Heart left ventricle (tissue), 16 donors: ENCODE measurements at regions of chr15 and their contacts with region 1.

Region 1: GRCh38 chr15:34987985-34988873 is at the start of gene ZNF770:
- DNase-seq: peak; percentile 79 to 91 (median 82)
- ATAC-seq: peak; percentile 88 to 95 (median 93)
- H3K4me3 ChIP-seq: peak within 1 kb of the TSS; percentile 59 to 89 (median 82)
- H3K27ac ChIP-seq: peak within 1 kb of the TSS; percentile 96 to 100 (median 98)
- H3K4me1 ChIP-seq: peaks cover 6 to 47% (median 38%) of the 10 kb centered on the region in 12 donors
- H3K27me3 ChIP-seq: no peaks in the 10 kb centered on the region
- CTCF ChIP-seq: no peak
- POLR2A ChIP-seq: peak in 1 of 2 donors; percentile 78
- total RNA-seq, gene ZNF770: 20.6 to 44.7 (median 39.1) TPM

Region 2: DNA sequence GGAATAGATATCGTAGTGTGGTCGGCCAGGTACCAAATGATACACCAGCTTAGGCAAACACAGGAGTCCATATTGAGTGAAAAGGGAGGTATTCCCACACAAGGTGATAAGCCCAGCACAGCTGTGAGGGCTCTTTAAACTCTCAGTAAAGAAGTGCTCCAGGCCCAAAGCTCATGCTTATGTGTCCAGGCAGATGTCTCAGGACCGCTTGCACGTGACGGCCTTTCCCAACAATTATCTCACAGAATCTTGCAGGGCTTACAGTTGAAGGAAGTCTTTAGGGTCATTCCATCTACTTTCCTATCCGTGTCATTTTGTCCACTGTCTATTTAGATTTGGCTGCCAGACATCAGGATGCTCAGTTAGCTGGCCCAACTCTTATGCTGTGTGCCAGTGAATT is 163.2 kb before region 1 on chr15:
- intact Hi-C with region 1: no loop called
- DNase-seq: no peak
- ATAC-seq: no peak
- H3K4me3 ChIP-seq: no peak overlapping the region
- H3K27ac ChIP-seq: no peak overlapping the region
- H3K4me1 ChIP-seq: no peaks in the 10 kb centered on the region
- H3K27me3 ChIP-seq: peaks cover 0 to 3% (median 0%) of the 10 kb centered on the region in 9 donors
- CTCF ChIP-seq: no peak
- POLR2A ChIP-seq: no peak

Region 3: DNA sequence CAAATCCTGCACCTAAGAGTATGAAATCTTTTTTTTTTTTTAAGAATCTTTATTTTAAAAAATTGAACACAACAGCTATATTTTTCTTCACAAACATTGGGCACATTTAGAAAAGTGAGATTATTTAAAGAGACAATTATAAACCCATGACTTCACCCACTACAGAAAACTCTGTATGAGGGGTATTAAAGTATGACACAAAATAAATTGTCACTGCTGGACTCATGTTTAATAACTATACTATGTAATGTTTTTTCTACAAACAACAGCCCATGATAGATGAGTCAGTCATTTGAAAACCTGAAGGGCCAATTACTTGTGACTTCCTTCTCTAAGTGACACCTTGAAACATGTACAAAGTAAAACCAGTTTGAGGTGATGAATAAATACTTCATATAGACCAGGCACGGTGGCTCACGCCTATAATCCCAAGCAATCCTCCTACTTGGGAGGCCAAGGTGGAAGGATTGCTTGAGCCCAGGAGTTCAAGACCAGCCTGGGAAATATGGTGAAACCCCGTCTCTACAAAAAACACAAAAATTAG is 54.7 kb before region 1 on chr15:
- intact Hi-C with region 1: no loop called
- DNase-seq: no peak
- ATAC-seq: no peak
- H3K4me3 ChIP-seq: no peak overlapping the region
- H3K27ac ChIP-seq: no peak overlapping the region
- H3K4me1 ChIP-seq: no peaks in the 10 kb centered on the region
- H3K27me3 ChIP-seq: no peaks in the 10 kb centered on the region
- CTCF ChIP-seq: no peak
- POLR2A ChIP-seq: no peak

Region 4: DNA sequence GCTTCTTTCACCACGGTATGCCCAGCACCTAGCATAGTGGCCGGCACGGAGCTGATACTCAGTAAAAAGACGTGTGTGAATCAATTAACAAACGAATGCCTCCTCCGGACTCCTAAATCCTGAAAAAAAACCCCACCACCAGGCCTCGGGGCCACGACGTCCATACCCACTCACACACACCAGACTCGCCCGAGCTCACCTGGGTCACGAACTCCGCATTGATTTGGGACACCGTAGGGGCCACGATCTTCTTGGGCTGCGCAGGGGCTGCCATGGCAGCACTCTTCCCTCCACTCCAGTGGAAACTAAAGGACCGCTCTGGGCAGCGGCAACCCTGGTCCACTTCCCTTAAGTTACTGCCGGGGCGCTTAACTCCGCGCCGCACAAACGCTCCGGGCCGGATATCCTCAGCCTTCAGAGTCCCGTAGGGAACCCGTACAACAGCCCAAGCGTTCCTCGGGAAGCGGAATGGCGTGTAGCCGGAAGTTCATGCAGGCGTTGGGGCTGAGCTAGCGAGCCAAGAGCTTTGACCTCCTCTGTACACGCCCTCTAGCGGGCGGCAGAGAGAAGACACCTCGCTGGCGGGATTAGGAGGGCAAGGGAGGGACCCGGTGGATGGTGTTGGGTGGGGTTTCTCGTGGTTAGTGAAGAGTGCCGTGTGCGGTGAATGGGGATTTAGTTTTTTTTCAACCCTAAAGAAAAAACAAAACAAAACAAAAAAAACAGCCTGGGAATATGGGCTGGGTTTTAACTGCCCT is 18.7 kb before region 1 on chr15 and contains the start of gene AQR:
- intact Hi-C with region 1: loop called in 4 of 10 experiments (anchors 1 to 2 kb)
- DNase-seq: peak; percentile 95 to 98 (median 96)
- ATAC-seq: peak; percentile 100
- H3K4me3 ChIP-seq: peak within 1 kb of the TSS; percentile 63 to 97 (median 84)
- H3K27ac ChIP-seq: peak within 1 kb of the TSS in 11 of 12 donors; percentile 64 to 88 (median 83)
- H3K4me1 ChIP-seq: peaks cover 0 to 40% (median 25%) of the 10 kb centered on the region in 12 donors
- H3K27me3 ChIP-seq: no peaks in the 10 kb centered on the region
- CTCF ChIP-seq: peak; percentile 56 to 98 (median 87)
- POLR2A ChIP-seq: peak in 1 of 2 donors; percentile 71
- total RNA-seq, gene AQR: 9.0 to 16.0 (median 12.1) TPM